Vagina (tissue), 2 donors: ENCODE measurements at regions of chr1 and their contacts with region 1.

Region 1: DNA sequence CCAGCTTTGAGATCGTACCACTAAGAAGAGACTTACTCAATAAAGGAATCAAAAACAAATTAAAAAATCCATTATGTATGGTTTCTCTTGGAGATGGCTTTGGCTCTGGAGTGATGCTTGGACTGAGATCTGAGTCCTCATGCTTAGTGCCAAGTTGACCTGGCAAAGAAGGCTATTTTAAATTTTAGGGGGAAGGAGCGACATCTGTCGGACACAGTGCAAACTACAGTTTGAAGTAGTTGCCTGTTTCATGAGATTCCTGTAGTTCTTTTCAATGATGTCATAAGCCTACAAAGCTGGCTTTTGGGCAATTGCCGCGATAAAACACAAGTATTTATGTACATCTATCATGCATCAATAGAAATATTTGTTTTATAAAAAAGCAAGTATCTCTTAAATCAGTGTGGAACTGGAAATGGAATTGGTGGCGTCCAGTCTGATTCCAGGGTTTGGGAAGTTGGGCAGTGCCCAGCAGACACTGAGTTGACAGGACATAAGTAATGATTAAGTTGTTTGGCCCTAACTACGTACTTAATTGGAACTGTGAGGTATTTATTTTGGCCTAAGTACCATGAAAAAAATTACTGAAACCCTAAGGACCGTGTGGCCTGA is 50.0 kb downstream of the TBCE start:
- DNase-seq: no peak
- H3K4me3 ChIP-seq: no peak overlapping the region
- H3K27ac ChIP-seq: no peak overlapping the region
- H3K4me1 ChIP-seq: no peaks in the 10 kb centered on the region
- H3K27me3 ChIP-seq: no peaks in the 10 kb centered on the region
- CTCF ChIP-seq: peak; percentile 72 to 89 (median 83)
- POLR2A ChIP-seq: no peak

Region 2: GRCh38 chr1:235105051-235106043 is 311.8 kb before region 1 on chr1:
- intact Hi-C with region 1: loop called (anchors 1 kb)
- DNase-seq: no peak
- H3K4me3 ChIP-seq: peak overlapping the region in 1 of 2 donors; percentile 31
- H3K27ac ChIP-seq: no peak overlapping the region
- H3K4me1 ChIP-seq: peaks cover 24% of the 10 kb centered on the region
- H3K27me3 ChIP-seq: no peaks in the 10 kb centered on the region
- CTCF ChIP-seq: no peak
- POLR2A ChIP-seq: no peak

Region 3: DNA sequence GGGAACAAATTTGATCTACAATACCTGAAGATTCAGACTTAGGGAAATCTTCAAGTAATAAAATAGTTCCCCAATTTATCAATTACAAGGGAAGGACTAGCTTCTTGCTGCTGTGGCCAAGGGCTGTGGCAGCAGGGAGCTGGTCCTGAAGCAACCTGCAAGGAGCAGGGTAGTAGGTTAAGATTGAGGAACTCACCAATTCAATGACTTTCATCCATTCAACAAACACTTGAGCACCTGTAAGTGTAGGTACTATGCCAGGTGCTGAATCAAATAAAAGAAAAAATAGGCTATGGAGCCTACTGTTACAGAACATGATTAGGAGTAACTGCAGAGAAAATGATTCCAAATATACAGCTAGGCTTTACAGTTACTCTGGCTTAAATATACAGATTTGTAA is 191.9 kb before region 1 on chr1:
- intact Hi-C with region 1: no loop called
- DNase-seq: no peak
- H3K4me3 ChIP-seq: no peak overlapping the region
- H3K27ac ChIP-seq: no peak overlapping the region
- H3K4me1 ChIP-seq: no peaks in the 10 kb centered on the region
- H3K27me3 ChIP-seq: no peaks in the 10 kb centered on the region
- CTCF ChIP-seq: no peak
- POLR2A ChIP-seq: no peak

Region 4: DNA sequence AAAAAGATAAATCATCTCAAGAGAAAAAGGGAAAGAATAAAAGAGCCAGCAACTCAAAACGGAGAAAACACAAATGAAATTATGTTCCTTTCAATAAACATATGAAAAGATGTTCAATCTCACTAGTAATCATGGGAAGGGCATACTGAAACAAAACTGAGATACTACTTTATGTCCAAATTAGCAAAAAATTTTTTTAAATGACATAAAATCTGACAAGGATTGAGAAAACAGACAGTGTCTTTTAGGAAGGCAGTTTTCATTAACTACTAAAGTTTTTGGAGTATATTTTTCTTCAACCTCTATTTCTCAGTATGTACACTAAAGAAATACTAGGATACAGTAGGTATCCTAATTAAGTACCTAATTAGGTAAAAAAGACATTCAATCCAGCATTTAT is 162.5 kb before region 1 on chr1:
- intact Hi-C with region 1: loop called (anchors 2 kb)
- DNase-seq: no peak
- H3K4me3 ChIP-seq: no peak overlapping the region
- H3K27ac ChIP-seq: no peak overlapping the region
- H3K4me1 ChIP-seq: peaks cover 16% of the 10 kb centered on the region
- H3K27me3 ChIP-seq: no peaks in the 10 kb centered on the region
- CTCF ChIP-seq: no peak
- POLR2A ChIP-seq: no peak